ENCODE measurements at regions of chr3 and their contacts with region 1.

Region 1: DNA sequence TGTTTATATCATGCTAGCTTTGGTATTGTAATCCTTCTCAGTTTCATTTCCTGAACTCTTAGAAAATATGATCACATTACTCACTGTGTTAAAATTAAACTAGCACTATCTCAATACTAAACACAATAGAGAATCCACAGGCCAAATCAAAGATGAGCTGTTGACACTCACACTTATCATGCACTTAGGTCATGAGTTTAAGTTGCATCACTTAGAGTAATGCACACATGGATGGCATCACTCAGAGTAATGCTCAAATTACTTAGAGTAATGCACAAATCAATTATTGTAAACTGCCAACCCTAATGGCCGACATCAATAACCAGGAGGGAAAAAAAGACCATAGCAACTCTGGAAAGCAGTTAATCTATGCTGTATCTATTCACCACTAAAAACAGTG is 40.0 kb upstream of the MCF2L2 start:
- DNase-seq: no peak
- ATAC-seq: no peak

Region 2: DNA sequence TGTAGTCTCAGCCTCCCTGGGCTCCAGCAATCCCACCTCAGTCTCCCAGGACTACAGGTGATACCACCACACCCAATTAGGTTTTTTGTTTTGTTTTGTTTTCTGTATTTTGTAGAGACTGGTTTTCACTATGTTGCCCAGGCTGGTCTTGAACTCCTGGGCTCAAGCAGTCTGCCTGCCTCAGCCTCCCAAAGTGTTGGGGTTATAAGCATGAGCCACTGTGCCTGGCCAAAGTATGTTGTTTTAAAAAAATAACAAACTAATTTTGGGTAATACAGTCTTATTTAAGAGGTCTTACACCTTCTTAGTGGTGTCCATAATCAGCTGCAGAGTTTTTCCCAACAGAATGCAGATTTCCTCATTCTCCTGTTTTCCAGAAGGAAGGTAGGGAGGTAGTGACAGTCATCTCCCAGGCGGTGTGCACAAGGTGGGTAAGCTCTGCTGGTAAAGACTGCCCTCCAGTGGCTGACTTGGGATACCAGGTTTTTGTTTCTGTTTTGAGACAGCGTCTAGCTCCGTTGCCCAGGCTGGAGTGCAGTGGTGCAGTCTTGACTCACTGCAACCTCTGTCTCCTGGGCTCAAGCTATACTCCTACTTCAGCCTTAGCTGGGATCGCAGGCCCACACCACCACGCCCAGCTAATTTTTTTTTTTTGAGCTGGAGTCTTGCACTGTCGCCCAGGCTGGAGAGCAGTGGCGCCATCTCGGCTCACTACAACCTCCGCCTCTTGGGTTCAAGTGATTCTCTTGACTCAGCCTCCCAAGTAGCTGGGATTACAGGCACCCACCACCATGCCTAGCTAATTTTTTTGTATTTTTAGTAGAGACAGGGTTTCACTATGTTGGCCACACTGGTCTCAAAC is 298.6 kb after region 1 on chr3:
- intact Hi-C with region 1: loop called (anchors 5 kb)
- DNase-seq: peak; percentile 81
- ATAC-seq: peak; percentile 87

Measured in sciatic nerve (tissue), 2 donors.